ENCODE measurements at regions of chr11 and their contacts with region 1.

Region 1: DNA sequence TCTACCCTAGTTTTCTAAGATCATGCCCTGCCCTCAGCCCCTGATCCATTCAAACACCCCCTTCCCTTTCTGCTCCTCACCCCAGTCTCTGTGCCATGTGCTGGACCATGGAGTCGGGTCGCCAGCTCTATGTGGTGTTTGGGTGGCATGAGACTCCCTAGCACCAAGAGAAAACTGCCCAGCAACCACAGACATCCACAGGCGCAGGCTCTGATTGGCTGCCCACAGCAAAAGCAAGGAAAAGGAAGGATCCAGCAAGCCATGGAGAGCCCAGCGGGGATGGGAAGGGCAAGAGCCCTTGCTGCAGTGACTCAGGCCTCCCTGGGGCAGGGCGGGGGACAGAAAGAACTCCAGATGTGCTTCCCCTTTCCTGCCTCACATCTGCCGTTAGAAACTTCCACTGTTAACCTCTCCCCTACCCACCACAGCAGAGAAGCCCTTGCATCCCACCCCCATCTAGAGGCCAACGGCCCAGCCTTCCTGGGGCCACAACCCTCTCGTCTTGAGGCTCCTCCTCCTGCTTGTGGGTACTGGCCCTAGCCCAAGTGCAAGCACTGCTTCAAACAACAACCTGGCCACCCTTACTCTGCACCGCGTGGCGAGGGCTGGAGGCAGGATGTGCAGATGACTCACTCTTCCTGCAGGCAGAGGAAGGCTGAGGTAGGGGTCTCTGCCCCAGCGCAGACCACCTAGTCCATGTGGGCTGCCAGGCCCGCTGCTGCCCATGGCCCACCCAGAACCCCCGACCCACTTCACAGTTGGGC is 9.7 kb upstream of the AHNAK start:
- DNase-seq: peak; percentile 72 to 96 (median 90)
- ATAC-seq: peak; percentile 52
- H3K4me3 ChIP-seq: peak overlapping the region; percentile 14 to 28
- H3K4me3 Mint-ChIP-seq: peak overlapping the region; percentile 77
- H3K27ac ChIP-seq: peak overlapping the region; percentile 86 to 92
- H3K27ac Mint-ChIP-seq: peak overlapping the region; percentile 97
- H3K4me1 ChIP-seq: peaks cover 87% of the 10 kb centered on the region
- H3K4me1 Mint-ChIP-seq: peaks cover 86% of the 10 kb centered on the region
- H3K27me3 ChIP-seq: no peaks in the 10 kb centered on the region
- H3K27me3 Mint-ChIP-seq: no peaks in the 10 kb centered on the region
- CTCF ChIP-seq: no peak

Region 2: GRCh38 chr11:62383822-62384221 is 172.5 kb before region 1 on chr11:
- CTCF ChIA-PET with region 1: interaction called, 6 read pairs
- POLR2A ChIA-PET with region 1: no interaction called
- intact Hi-C with region 1: loop called in 1 of 2 experiments (anchors 1 kb)
- DNase-seq: no peak
- ATAC-seq: no peak
- H3K4me3 ChIP-seq: no peak overlapping the region
- H3K4me3 Mint-ChIP-seq: no peak overlapping the region
- H3K27ac ChIP-seq: no peak overlapping the region
- H3K27ac Mint-ChIP-seq: no peak overlapping the region
- H3K4me1 ChIP-seq: peaks cover 9% of the 10 kb centered on the region
- H3K4me1 Mint-ChIP-seq: peaks cover 9% of the 10 kb centered on the region
- H3K27me3 ChIP-seq: no peaks in the 10 kb centered on the region
- H3K27me3 Mint-ChIP-seq: no peaks in the 10 kb centered on the region
- CTCF ChIP-seq: no peak

Region 3: GRCh38 chr11:62497132-62497915 is 59.0 kb before region 1 on chr11:
- CTCF ChIA-PET with region 1: interaction called, 8 read pairs
- POLR2A ChIA-PET with region 1: no interaction called
- intact Hi-C with region 1: loop called in 1 of 2 experiments (anchors 1 kb)
- DNase-seq: peak in 1 of 9 experiments; percentile 48
- ATAC-seq: no peak
- H3K4me3 ChIP-seq: no peak overlapping the region
- H3K4me3 Mint-ChIP-seq: no peak overlapping the region
- H3K27ac ChIP-seq: no peak overlapping the region
- H3K27ac Mint-ChIP-seq: no peak overlapping the region
- H3K4me1 ChIP-seq: no peaks in the 10 kb centered on the region
- H3K4me1 Mint-ChIP-seq: no peaks in the 10 kb centered on the region
- H3K27me3 ChIP-seq: no peaks in the 10 kb centered on the region
- H3K27me3 Mint-ChIP-seq: peaks cover 8% of the 10 kb centered on the region
- CTCF ChIP-seq: no peak

Region 4: DNA sequence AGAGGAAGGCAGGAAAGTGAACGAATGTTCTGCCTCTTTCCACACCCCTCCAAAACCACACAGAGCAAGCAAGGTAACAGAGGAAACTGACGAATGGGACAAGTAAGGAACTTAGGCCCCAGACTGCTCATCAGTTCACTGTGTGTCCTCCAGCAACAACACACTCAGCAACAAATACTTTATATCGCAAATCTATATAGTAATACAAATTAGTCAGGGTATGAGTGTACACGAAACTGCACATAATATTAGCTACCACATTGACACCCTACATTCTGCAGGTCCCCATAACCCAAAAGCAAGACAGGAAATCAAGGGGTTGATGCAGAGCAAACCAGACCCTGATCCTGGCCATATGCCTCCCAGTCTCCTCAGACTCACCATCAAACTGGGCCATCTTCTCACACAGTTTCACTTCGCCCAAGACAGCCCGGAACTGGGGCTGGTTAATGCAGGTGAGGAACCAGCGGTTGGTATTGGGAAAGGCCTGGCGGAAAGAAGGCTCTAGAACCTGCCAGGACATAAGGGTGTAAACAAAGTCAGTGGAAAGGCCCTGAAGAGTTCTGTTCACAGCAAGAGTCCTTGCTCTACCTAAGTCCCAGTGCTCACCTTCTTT is 10.8 kb after region 1 on chr11:
- CTCF ChIA-PET with region 1: interaction called, 53 read pairs
- POLR2A ChIA-PET with region 1: interaction called, 12 read pairs
- intact Hi-C with region 1: loop called in 1 of 2 experiments (anchors 2 kb)
- DNase-seq: no peak
- ATAC-seq: no peak
- H3K4me3 ChIP-seq: no peak overlapping the region
- H3K4me3 Mint-ChIP-seq: no peak overlapping the region
- H3K27ac ChIP-seq: no peak overlapping the region
- H3K27ac Mint-ChIP-seq: peak overlapping the region; percentile 57
- H3K4me1 ChIP-seq: peaks cover 8% of the 10 kb centered on the region
- H3K4me1 Mint-ChIP-seq: peaks cover 35% of the 10 kb centered on the region
- H3K27me3 ChIP-seq: no peaks in the 10 kb centered on the region
- H3K27me3 Mint-ChIP-seq: no peaks in the 10 kb centered on the region
- CTCF ChIP-seq: no peak

Region 5: DNA sequence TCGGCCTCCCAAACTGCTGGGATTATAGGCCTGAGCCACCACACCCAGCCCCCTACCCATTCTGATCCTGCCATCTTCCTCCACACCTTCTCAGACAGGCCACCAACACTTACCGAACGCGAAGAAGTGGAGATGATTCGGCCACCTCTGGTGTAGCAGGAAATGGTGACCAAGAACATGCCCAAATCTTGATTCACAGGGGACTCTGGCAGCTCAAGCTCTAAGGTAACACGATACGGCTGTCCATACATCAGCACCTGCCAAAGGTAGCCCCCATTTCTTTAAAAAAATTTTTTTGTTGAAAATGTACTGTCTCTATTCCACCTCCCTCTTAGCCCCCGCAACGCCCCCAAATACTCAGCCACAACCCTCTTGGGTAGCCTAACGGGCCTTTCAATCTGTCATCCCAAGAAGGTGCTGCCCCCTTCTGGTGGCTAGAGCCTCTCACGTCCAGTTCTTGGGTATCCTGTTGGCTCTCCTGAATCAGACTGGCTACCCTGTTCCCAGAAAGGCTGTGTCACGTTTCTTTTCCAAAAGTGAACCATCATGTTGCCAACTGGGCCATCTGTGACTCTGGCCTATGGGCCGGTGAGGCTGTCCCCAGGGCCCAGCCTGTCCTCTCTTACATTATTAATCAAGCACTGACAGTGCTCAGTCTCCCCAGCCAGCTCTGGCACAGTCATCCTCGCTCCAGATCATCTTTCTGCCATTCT is 138.3 kb after region 1 on chr11:
- CTCF ChIA-PET with region 1: interaction called, 11 read pairs
- POLR2A ChIA-PET with region 1: interaction called, 3 read pairs
- intact Hi-C with region 1: no loop called
- DNase-seq: peak; percentile 57 to 88 (median 81)
- ATAC-seq: peak; percentile 91
- H3K4me3 ChIP-seq: no peak overlapping the region
- H3K4me3 Mint-ChIP-seq: no peak overlapping the region
- H3K27ac ChIP-seq: no peak overlapping the region
- H3K27ac Mint-ChIP-seq: no peak overlapping the region
- H3K4me1 ChIP-seq: peaks cover 6% of the 10 kb centered on the region
- H3K4me1 Mint-ChIP-seq: peaks cover 3% of the 10 kb centered on the region
- H3K27me3 ChIP-seq: no peaks in the 10 kb centered on the region
- H3K27me3 Mint-ChIP-seq: no peaks in the 10 kb centered on the region
- CTCF ChIP-seq: peak; percentile 79

Region 6: DNA sequence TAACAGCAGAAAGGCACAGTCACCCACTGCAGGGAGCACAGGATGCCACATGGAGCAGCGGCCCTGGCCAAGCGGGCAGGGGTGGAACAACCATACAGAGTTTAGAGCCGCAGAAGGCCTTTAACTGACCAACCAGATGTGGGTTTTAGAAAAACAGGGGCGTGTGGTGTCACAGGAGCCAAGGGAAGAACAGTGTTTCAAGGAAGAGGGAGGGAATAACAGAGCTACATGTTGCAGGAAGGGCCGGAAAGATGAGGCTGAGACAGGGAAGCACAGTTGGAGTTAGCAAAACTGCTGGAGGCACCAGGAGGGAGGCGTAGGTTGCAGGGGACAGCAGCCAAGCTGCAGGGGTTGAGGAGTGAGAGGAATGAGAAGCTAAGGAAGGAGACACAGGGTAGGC is 1374.8 kb after region 1 on chr11:
- CTCF ChIA-PET with region 1: no interaction called
- POLR2A ChIA-PET with region 1: no interaction called
- intact Hi-C with region 1: no loop called
- DNase-seq: no peak
- ATAC-seq: no peak
- H3K4me3 ChIP-seq: no peak overlapping the region
- H3K4me3 Mint-ChIP-seq: no peak overlapping the region
- H3K27ac ChIP-seq: no peak overlapping the region
- H3K27ac Mint-ChIP-seq: no peak overlapping the region
- H3K4me1 ChIP-seq: no peaks in the 10 kb centered on the region
- H3K4me1 Mint-ChIP-seq: no peaks in the 10 kb centered on the region
- H3K27me3 ChIP-seq: no peaks in the 10 kb centered on the region
- H3K27me3 Mint-ChIP-seq: no peaks in the 10 kb centered on the region
- CTCF ChIP-seq: no peak

Measured in CD8-positive, alpha-beta T cell (primary cell).